Body of pancreas (tissue), 4 donors: ENCODE measurements at regions of chr14 and their contacts with region 1.

Region 1: DNA sequence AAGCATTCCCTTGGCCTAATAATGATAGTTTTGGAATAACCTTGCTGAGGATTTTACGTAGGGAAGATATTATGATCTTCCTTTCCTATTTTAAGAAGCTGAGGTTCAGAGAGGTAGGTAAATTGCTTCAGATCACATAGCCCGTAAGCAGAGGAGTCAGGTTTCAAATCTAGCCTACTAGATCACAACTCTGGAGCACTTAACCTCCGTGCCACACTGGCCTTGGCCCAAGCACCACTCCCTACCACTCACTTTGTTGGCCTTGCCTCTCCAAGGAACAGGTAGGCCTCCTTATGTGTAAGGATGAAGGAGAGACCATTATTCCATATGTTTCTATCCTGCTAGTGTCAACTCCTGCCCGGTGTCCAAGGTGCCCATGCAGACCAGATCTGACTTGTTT is 12.4 kb upstream of the ACOT1 start:
- DNase-seq: no peak
- ATAC-seq: no peak
- H3K4me3 ChIP-seq: no peak overlapping the region
- H3K27ac ChIP-seq: no peak overlapping the region
- H3K4me1 ChIP-seq: peaks cover 16% of the 10 kb centered on the region
- H3K27me3 ChIP-seq: no peaks in the 10 kb centered on the region
- CTCF ChIP-seq: no peak
- POLR2A ChIP-seq: no peak

Region 2: GRCh38 chr14:73568381-73568781 is 43.9 kb after region 1 on chr14:
- intact Hi-C with region 1: loop called (anchors 10 kb)
- DNase-seq: no peak
- ATAC-seq: no peak
- H3K4me3 ChIP-seq: no peak overlapping the region
- H3K27ac ChIP-seq: peak overlapping the region; percentile 78 to 93 (median 88)
- H3K4me1 ChIP-seq: peaks cover 39% of the 10 kb centered on the region
- H3K27me3 ChIP-seq: no peaks in the 10 kb centered on the region
- CTCF ChIP-seq: no peak
- POLR2A ChIP-seq: no peak

Region 3: GRCh38 chr14:73633116-73634010 is 108.9 kb after region 1 on chr14:
- intact Hi-C with region 1: loop called (anchors 10 kb)
- DNase-seq: peak; percentile 60 to 71 (median 68)
- ATAC-seq: peak; percentile 83
- H3K4me3 ChIP-seq: peak overlapping the region; percentile 2 to 67
- H3K27ac ChIP-seq: peak overlapping the region in 3 of 4 donors; percentile 8 to 61 (median 39)
- H3K4me1 ChIP-seq: peaks cover 16% of the 10 kb centered on the region
- H3K27me3 ChIP-seq: no peaks in the 10 kb centered on the region
- CTCF ChIP-seq: peak; percentile 81 to 92 (median 87)
- POLR2A ChIP-seq: no peak